Naive thymus-derived CD4-positive, alpha-beta T cell (primary cell): ENCODE measurements at regions of chr10 and their contacts with region 1.

Region 1: GRCh38 chr10:31318854-31319601 is at the start of gene ZEB1:
- DNase-seq: peak; percentile 64 to 96 (median 91)
- ATAC-seq: peak; percentile 79
- H3K4me3 ChIP-seq: peak within 1 kb of the TSS; percentile 89
- H3K4me3 Mint-ChIP-seq: peak within 1 kb of the TSS; percentile 91 to 100 (median 99)
- H3K27ac ChIP-seq: peak within 1 kb of the TSS; percentile 99
- H3K27ac Mint-ChIP-seq: peak within 1 kb of the TSS; percentile 96 to 100 (median 99)
- H3K4me1 ChIP-seq: peaks cover 11 to 27% of the 10 kb centered on the region in 2 donors
- H3K4me1 Mint-ChIP-seq: peaks cover 14 to 48% (median 41%) of the 10 kb centered on the region in 7 donors
- H3K27me3 ChIP-seq: no peaks in the 10 kb centered on the region
- H3K27me3 Mint-ChIP-seq: peaks cover 0 to 2% (median 0%) of the 10 kb centered on the region in 5 donors
- total RNA-seq, gene ZEB1: 65.5 to 126 (median 80.9) TPM

Region 2: DNA sequence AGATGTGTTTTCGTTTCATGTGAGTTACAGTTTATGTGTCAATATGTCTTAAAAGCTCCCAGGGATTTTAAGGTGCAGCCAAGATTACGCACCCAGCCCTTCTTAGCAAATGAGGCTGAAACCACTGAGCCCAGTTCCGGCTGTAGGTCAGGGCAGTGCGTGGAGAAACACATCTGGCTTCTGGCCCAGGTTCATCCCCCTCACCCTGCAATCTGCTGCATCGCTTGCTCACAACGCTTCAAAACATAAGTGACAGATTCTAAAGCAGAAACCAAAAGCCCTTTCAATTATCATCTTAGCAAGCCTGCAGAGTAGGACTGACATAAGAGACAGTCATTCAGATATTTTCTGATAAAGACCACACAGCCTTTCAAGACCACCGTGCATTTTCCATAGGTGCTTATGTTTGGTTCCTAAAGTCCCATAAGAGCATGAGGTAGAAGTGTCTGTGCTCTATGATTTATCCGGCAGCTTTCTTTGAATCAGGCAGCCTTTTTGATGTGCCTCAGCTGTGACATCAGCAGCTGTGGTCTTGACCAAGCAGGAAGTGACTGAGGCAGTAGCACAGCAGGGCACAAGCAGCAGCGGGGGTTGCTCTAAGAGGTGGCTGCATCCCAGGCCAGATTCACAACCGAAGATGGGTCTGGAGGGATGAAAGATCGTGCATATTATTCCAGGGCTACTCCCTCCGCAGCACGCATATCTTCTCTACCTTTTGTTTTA is 617.4 kb before region 1 on chr10:
- CTCF ChIA-PET with region 1: no interaction called
- POLR2A ChIA-PET with region 1: no interaction called
- intact Hi-C with region 1: loop called (anchors 5 kb)
- DNase-seq: peak in 8 of 9 donors; percentile 68 to 81 (median 74)
- ATAC-seq: peak; percentile 80
- H3K4me3 ChIP-seq: peak overlapping the region; percentile 31
- H3K4me3 Mint-ChIP-seq: peak overlapping the region; percentile 68 to 98 (median 88)
- H3K27ac ChIP-seq: peak overlapping the region; percentile 86
- H3K27ac Mint-ChIP-seq: peak overlapping the region; percentile 88 to 98 (median 96)
- H3K4me1 ChIP-seq: peaks cover 63 to 74% of the 10 kb centered on the region in 2 donors
- H3K4me1 Mint-ChIP-seq: peaks cover 51 to 97% (median 88%) of the 10 kb centered on the region in 7 donors
- H3K27me3 ChIP-seq: no peaks in the 10 kb centered on the region
- H3K27me3 Mint-ChIP-seq: no peaks in the 10 kb centered on the region

Region 3: GRCh38 chr10:31133628-31134302 is 185.3 kb before region 1 on chr10:
- CTCF ChIA-PET with region 1: no interaction called
- POLR2A ChIA-PET with region 1: no interaction called
- intact Hi-C with region 1: loop called (anchors 1 kb)
- DNase-seq: peak; percentile 14 to 67 (median 38)
- ATAC-seq: peak; percentile 78
- H3K4me3 ChIP-seq: peak overlapping the region; percentile 66
- H3K4me3 Mint-ChIP-seq: peak overlapping the region; percentile 71 to 87 (median 82)
- H3K27ac ChIP-seq: peak overlapping the region; percentile 80
- H3K27ac Mint-ChIP-seq: peak overlapping the region; percentile 72 to 92 (median 87)
- H3K4me1 ChIP-seq: peaks cover 0 to 33% of the 10 kb centered on the region in 2 donors
- H3K4me1 Mint-ChIP-seq: peaks cover 18 to 68% (median 44%) of the 10 kb centered on the region in 7 donors
- H3K27me3 ChIP-seq: no peaks in the 10 kb centered on the region
- H3K27me3 Mint-ChIP-seq: no peaks in the 10 kb centered on the region

Region 4: GRCh38 chr10:31374146-31374696 is 55.2 kb after region 1 on chr10:
- CTCF ChIA-PET with region 1: no interaction called
- POLR2A ChIA-PET with region 1: no interaction called
- intact Hi-C with region 1: no loop called
- DNase-seq: no peak
- ATAC-seq: no peak
- H3K4me3 ChIP-seq: no peak overlapping the region
- H3K4me3 Mint-ChIP-seq: peak overlapping the region in 1 of 10 donors; percentile 22
- H3K27ac ChIP-seq: no peak overlapping the region
- H3K27ac Mint-ChIP-seq: no peak overlapping the region
- H3K4me1 ChIP-seq: peaks cover 0 to 21% of the 10 kb centered on the region in 2 donors
- H3K4me1 Mint-ChIP-seq: peaks cover 19 to 80% (median 64%) of the 10 kb centered on the region in 7 donors
- H3K27me3 ChIP-seq: no peaks in the 10 kb centered on the region
- H3K27me3 Mint-ChIP-seq: no peaks in the 10 kb centered on the region

Region 5: DNA sequence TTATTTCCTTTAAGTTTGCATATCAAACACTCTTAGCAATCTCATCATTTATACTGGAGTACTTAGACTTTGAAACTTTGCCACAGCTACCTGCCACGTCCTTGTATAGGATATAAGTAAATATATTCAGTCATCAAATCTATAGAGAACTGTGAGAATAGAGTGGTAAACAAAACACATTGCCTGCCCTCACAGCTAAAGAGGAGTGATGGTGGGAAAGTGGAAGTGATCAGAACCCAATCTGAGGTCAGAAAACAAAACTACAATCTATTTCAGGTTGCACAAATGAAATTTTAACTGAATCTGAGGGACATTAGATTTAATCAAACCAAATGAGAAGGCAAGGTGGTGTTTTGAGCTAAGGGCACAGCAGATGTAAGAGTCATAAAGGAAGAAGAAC is 74.8 kb after region 1 on chr10:
- CTCF ChIA-PET with region 1: no interaction called
- POLR2A ChIA-PET with region 1: no interaction called
- intact Hi-C with region 1: loop called in 1 of 2 experiments (anchors 5 kb)
- DNase-seq: no peak
- ATAC-seq: no peak
- H3K4me3 ChIP-seq: no peak overlapping the region
- H3K4me3 Mint-ChIP-seq: no peak overlapping the region
- H3K27ac ChIP-seq: no peak overlapping the region
- H3K27ac Mint-ChIP-seq: no peak overlapping the region
- H3K4me1 ChIP-seq: no peaks in the 10 kb centered on the region
- H3K4me1 Mint-ChIP-seq: peaks cover 20 to 61% (median 52%) of the 10 kb centered on the region in 7 donors
- H3K27me3 ChIP-seq: no peaks in the 10 kb centered on the region
- H3K27me3 Mint-ChIP-seq: no peaks in the 10 kb centered on the region

Region 6: DNA sequence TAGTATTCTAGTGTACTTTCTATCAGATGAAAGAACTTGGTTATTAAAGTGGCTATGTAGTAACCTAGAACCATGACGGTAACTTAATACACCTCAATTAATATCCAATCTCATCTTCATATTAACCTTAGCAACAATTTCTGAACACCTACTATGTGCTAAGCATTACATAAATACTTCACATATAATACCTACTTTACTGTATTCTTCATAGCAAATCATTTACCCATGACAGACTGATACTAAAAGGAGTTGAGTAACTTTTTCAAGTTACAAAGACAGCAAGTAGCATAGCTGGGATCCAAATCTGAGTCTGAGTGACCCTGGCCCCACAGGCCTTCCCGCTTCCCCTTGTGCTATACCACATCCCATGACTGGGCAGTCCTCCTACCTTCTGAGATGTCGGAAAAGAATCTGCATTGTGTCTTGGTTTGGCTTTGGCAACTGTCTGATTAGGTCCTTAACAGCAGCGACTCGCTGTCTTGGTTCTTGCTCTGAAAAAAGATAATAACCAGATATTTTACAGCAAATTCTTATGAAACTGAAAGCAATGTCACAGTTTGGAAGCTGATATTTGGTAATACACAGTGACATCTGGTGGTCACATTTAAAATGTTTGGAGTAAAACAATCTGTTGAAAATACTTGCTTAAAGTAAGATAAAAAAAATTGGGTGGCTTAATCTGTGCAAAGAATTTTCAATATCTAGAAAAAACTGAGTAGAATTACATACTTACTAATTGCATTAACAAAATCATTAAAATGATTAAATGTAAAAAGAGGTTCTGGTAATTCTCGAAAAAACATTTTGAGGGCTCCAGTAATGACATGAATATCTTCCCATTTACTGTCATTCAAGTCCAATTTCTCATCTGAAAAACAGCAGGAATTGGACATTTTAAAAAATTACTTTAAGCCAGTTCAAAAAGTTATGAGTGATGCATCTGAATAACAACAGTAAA is 489.5 kb after region 1 on chr10:
- CTCF ChIA-PET with region 1: no interaction called
- POLR2A ChIA-PET with region 1: no interaction called
- intact Hi-C with region 1: loop called (anchors 2 to 5 kb)
- DNase-seq: peak in 8 of 9 donors; percentile 21 to 62 (median 48)
- ATAC-seq: peak; percentile 77
- H3K4me3 ChIP-seq: no peak overlapping the region
- H3K4me3 Mint-ChIP-seq: peak overlapping the region in 3 of 10 donors; percentile 51 to 78 (median 56)
- H3K27ac ChIP-seq: no peak overlapping the region
- H3K27ac Mint-ChIP-seq: peak overlapping the region in 8 of 9 donors; percentile 17 to 94 (median 71)
- H3K4me1 ChIP-seq: no peaks in the 10 kb centered on the region
- H3K4me1 Mint-ChIP-seq: peaks cover 2 to 11% (median 6%) of the 10 kb centered on the region in 7 donors
- H3K27me3 ChIP-seq: no peaks in the 10 kb centered on the region
- H3K27me3 Mint-ChIP-seq: no peaks in the 10 kb centered on the region

Region 7: DNA sequence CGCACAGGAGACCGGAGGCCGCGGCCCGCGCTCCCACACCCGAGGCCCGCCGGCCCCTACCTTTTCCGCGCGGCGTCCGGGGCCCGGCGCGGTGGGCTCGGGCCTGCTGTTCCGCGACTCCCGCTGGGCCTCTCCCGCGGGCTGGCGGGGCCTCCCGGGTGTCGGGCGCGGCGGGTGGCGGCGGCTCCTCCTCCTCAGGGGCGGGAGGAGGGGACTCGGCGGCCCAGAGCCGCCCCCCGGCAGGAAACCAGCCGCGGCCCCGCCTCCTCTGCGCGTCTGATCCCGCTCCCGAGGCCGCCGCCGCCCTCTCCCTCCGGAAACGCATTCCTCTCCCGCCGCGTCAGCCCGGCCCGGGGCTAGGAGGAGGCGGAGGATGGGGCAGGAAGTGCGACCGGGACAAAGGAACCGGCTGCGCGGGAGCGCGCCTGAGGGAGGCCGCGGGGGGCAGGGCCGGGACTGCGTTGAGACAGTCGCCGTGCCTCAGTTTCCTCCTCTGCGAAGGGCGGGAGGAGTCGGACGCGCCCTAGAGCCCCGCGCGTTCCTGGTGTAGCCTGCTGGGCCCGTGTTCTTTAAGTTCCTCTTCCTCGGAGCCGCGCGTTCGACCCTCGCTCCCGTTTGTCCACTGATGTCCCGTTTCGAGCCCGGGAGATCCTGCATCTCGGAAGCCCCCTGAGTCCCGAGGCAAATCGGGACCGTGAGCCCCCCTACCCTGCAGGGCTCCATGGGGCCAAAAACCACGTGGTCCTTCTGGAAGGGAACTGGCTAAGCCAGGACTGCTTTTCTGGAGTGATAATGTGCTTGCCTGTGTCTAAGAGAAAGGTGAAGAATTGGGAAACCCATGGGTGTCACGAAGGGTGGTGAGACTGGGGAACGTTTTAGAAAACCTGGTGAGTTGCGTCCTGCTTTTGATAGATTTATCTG is 1639.3 kb after region 1 on chr10 and contains the start of gene ITGB1:
- CTCF ChIA-PET with region 1: no interaction called
- POLR2A ChIA-PET with region 1: no interaction called
- intact Hi-C with region 1: loop called in 1 of 2 experiments (anchors 5 kb)
- DNase-seq: peak; percentile 73 to 91 (median 82)
- ATAC-seq: peak; percentile 95
- H3K4me3 ChIP-seq: peak within 1 kb of the TSS; percentile 88
- H3K4me3 Mint-ChIP-seq: peak within 1 kb of the TSS; percentile 78 to 95 (median 88)
- H3K27ac ChIP-seq: peak within 1 kb of the TSS; percentile 68
- H3K27ac Mint-ChIP-seq: peak within 1 kb of the TSS; percentile 74 to 90 (median 82)
- H3K4me1 ChIP-seq: peaks cover 7 to 8% of the 10 kb centered on the region in 2 donors
- H3K4me1 Mint-ChIP-seq: peaks cover 29 to 60% (median 54%) of the 10 kb centered on the region in 7 donors
- H3K27me3 ChIP-seq: no peaks in the 10 kb centered on the region
- H3K27me3 Mint-ChIP-seq: peaks cover 0 to 13% (median 0%) of the 10 kb centered on the region in 5 donors
- total RNA-seq, gene ITGB1: 43.2 to 205 (median 60.8) TPM